Cardiac septum (tissue), 1 donor: ENCODE measurements at regions of chr14 and their contacts with region 1.

Region 1: GRCh38 chr14:104580961-104581360 is 1.4 kb downstream of the C14orf180 start:
- DNase-seq: peak; percentile 80

Region 2: GRCh38 chr14:104085030-104085888 is 495.7 kb before region 1 on chr14 and contains the start of gene ASPG:
- intact Hi-C with region 1: loop called (anchors 5 kb)
- DNase-seq: no peak
- total RNA-seq, gene ASPG: 4.4 TPM

Region 3: GRCh38 chr14:104545151-104545941 is 35.6 kb before region 1 on chr14:
- intact Hi-C with region 1: no loop called
- DNase-seq: peak; percentile 60

Region 4: GRCh38 chr14:104639889-104640548 is 59.1 kb after region 1 on chr14:
- intact Hi-C with region 1: loop called (anchors 5 kb)
- DNase-seq: no peak

Region 5: DNA sequence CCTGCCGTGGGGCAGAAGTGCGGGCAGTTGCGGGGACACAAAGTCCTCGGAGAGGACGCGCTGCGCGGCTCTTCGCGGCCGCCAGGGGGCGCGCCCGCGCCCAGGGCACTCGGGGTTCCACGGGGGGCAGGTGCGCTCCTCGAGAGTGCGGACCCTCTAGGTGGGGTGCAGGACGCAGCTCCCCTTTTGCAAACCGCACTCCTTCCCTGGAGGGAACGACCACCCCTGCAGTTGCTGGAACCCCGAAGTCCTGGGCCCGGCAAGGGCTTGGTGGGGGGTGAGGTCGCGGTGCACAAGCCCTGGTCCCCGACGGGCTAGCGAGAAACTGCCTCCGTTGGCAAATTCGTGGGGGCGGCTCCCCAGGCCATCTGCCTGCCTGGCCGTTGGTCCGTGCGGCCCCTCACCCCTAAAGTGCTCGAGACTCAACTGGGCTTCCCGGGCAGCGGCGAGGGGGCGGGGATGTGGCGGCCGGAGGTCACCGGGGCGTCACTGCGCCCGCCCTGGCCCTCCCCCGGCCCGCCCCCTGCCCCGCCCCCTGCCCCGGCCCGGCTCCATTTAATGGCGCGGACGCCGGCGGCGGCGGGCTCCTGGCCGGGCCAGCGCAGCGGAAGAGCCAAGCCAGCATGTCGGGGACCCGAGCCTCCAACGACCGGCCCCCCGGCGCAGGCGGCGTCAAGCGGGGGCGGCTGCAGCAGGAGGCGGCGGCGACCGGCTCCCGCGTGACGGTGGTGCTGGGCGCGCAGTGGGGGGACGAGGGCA is 142.9 kb after region 1 on chr14 and contains the start of gene ADSS1:
- intact Hi-C with region 1: loop called (anchors 10 kb)
- DNase-seq: peak; percentile 89
- total RNA-seq, gene ADSS1: 114 TPM